ENCODE measurements at regions of chr2 and their contacts with region 1.

Region 1: GRCh38 chr2:24382363-24383073 is 22.2 kb upstream of the ITSN2 start:
- DNase-seq: peak; percentile 35
- ATAC-seq: peak; percentile 97
- H3K4me3 Mint-ChIP-seq: no peak overlapping the region
- H3K27ac Mint-ChIP-seq: no peak overlapping the region
- H3K4me1 Mint-ChIP-seq: peaks cover 2% of the 10 kb centered on the region
- H3K27me3 Mint-ChIP-seq: no peaks in the 10 kb centered on the region
- CTCF ChIP-seq: no peak

Region 2: DNA sequence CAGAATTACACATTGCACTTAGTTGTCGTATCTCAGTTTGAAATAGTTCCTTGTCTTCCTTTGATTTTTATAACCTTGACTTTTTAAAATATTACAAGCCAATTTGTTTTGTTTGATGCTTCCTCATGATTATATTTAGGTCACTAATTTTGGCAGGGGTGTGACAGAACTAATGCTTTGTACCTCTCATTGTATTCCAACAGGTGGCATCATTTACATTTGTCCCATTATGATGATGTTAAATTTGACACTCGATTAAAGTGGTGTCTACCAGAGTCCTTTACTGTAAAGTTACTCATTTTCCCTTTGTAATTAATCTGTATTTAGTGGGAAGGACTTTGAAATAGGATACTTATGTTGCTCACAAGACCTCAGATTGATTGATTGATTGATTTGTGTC is 394.1 kb before region 1 on chr2:
- CTCF ChIA-PET with region 1: no interaction called
- POLR2A ChIA-PET with region 1: no interaction called
- intact Hi-C with region 1: loop called (anchors 1 kb)
- DNase-seq: no peak
- ATAC-seq: no peak
- H3K4me3 Mint-ChIP-seq: no peak overlapping the region
- H3K27ac Mint-ChIP-seq: no peak overlapping the region
- H3K4me1 Mint-ChIP-seq: no peaks in the 10 kb centered on the region
- H3K27me3 Mint-ChIP-seq: no peaks in the 10 kb centered on the region
- CTCF ChIP-seq: no peak

Region 3: DNA sequence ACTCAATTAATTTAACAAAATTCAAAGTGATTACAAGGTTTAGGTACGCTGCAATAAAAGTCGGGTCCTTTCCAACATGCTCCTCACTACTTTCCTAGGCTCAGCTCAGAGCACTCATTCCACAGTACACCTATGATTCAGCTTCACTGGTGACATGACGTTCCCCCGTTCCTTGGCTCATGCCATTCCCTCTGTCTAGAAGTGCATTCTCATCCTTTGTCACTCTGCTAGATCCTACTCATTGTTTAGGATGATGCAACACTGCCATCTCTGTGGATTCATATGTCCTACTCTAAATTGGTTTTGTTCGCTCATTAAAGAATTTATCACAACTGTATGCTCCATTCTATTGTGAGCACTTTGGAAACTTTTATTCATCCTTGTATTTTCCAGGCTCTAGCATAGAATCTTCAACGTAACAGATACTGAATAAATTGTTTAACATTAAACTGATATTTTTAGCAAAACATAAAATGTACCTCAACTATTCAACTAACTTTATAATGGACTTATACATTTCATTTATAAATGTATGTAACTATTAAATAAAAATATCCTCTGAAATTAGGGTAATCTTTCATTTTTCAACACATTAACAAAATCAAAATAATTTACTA is 129.1 kb before region 1 on chr2:
- CTCF ChIA-PET with region 1: no interaction called
- POLR2A ChIA-PET with region 1: no interaction called
- intact Hi-C with region 1: loop called (anchors 5 kb)
- DNase-seq: no peak
- ATAC-seq: no peak
- H3K4me3 Mint-ChIP-seq: no peak overlapping the region
- H3K27ac Mint-ChIP-seq: no peak overlapping the region
- H3K4me1 Mint-ChIP-seq: no peaks in the 10 kb centered on the region
- H3K27me3 Mint-ChIP-seq: no peaks in the 10 kb centered on the region
- CTCF ChIP-seq: no peak

Region 4: GRCh38 chr2:24307961-24308360 is 74.6 kb before region 1 on chr2:
- CTCF ChIA-PET with region 1: no interaction called
- POLR2A ChIA-PET with region 1: no interaction called
- intact Hi-C with region 1: loop called (anchors 2 kb)
- DNase-seq: no peak
- ATAC-seq: no peak
- H3K4me3 Mint-ChIP-seq: no peak overlapping the region
- H3K27ac Mint-ChIP-seq: no peak overlapping the region
- H3K4me1 Mint-ChIP-seq: no peaks in the 10 kb centered on the region
- H3K27me3 Mint-ChIP-seq: no peaks in the 10 kb centered on the region
- CTCF ChIP-seq: no peak

Region 5: GRCh38 chr2:24360050-24360962 is 22.2 kb before region 1 on chr2 and contains the start of gene ITSN2:
- CTCF ChIA-PET with region 1: interaction called, 3 read pairs
- POLR2A ChIA-PET with region 1: interaction called, 3 read pairs
- intact Hi-C with region 1: loop called (anchors 2 kb)
- DNase-seq: peak; percentile 88
- ATAC-seq: peak; percentile 85
- H3K4me3 Mint-ChIP-seq: peak within 1 kb of the TSS; percentile 91
- H3K27ac Mint-ChIP-seq: peak within 1 kb of the TSS; percentile 97
- H3K4me1 Mint-ChIP-seq: peaks cover 50% of the 10 kb centered on the region
- H3K27me3 Mint-ChIP-seq: no peaks in the 10 kb centered on the region
- CTCF ChIP-seq: no peak
- total RNA-seq, gene ITSN2: 147 and 156 TPM in 2 replicates

Region 6: GRCh38 chr2:24559475-24560109 is 177.1 kb after region 1 on chr2:
- CTCF ChIA-PET with region 1: no interaction called
- POLR2A ChIA-PET with region 1: no interaction called
- intact Hi-C with region 1: no loop called
- DNase-seq: no peak
- ATAC-seq: no peak
- H3K4me3 Mint-ChIP-seq: no peak overlapping the region
- H3K27ac Mint-ChIP-seq: no peak overlapping the region
- H3K4me1 Mint-ChIP-seq: peaks cover 32% of the 10 kb centered on the region
- H3K27me3 Mint-ChIP-seq: no peaks in the 10 kb centered on the region
- CTCF ChIP-seq: no peak